CD4-positive, alpha-beta T cell (primary cell): ENCODE measurements at regions of chr11 and their contacts with region 1.

Region 1: GRCh38 chr11:82059505-82059904 is 674.2 kb downstream of the FAM181B start:
- DNase-seq: no peak
- ATAC-seq: no peak
- H3K4me3 ChIP-seq: no peak overlapping the region
- H3K4me3 Mint-ChIP-seq: no peak overlapping the region
- H3K27ac ChIP-seq: no peak overlapping the region
- H3K27ac Mint-ChIP-seq: no peak overlapping the region
- H3K4me1 ChIP-seq: no peaks in the 10 kb centered on the region
- H3K4me1 Mint-ChIP-seq: no peaks in the 10 kb centered on the region
- H3K27me3 ChIP-seq: no peaks in the 10 kb centered on the region
- H3K27me3 Mint-ChIP-seq: no peaks in the 10 kb centered on the region
- CTCF ChIP-seq: no peak

Region 2: DNA sequence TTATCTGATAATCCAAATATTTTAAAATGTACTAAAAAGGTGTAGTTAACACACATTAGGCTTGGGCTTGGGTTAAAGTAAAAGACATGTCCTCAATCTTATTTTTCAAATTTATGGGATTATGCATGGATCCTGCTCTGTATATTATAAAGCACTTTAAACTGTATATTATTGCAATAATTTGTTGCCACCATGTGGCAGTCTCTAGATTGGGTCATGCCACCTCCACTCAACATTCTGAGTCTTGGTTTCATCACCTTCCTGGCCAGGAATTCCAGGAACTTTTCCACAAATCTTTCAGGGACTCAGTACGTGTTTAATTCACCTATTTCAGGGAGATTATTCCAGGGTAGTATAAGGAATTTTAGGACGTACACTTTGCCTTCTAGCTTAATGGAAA is 21.4 kb before region 1 on chr11:
- CTCF ChIA-PET with region 1: no interaction called
- POLR2A ChIA-PET with region 1: no interaction called
- intact Hi-C with region 1: no loop called
- DNase-seq: no peak
- ATAC-seq: no peak
- H3K4me3 ChIP-seq: no peak overlapping the region
- H3K4me3 Mint-ChIP-seq: no peak overlapping the region
- H3K27ac ChIP-seq: no peak overlapping the region
- H3K27ac Mint-ChIP-seq: no peak overlapping the region
- H3K4me1 ChIP-seq: no peaks in the 10 kb centered on the region
- H3K4me1 Mint-ChIP-seq: no peaks in the 10 kb centered on the region
- H3K27me3 ChIP-seq: no peaks in the 10 kb centered on the region
- H3K27me3 Mint-ChIP-seq: no peaks in the 10 kb centered on the region
- CTCF ChIP-seq: no peak

Region 3: GRCh38 chr11:82082981-82083380 is 23.5 kb after region 1 on chr11:
- CTCF ChIA-PET with region 1: no interaction called
- POLR2A ChIA-PET with region 1: no interaction called
- intact Hi-C with region 1: loop called in 1 of 2 experiments (anchors 1 kb)
- DNase-seq: no peak
- ATAC-seq: no peak
- H3K4me3 ChIP-seq: no peak overlapping the region
- H3K4me3 Mint-ChIP-seq: no peak overlapping the region
- H3K27ac ChIP-seq: no peak overlapping the region
- H3K27ac Mint-ChIP-seq: no peak overlapping the region
- H3K4me1 ChIP-seq: no peaks in the 10 kb centered on the region
- H3K4me1 Mint-ChIP-seq: no peaks in the 10 kb centered on the region
- H3K27me3 ChIP-seq: no peaks in the 10 kb centered on the region
- H3K27me3 Mint-ChIP-seq: peaks cover 5% of the 10 kb centered on the region
- CTCF ChIP-seq: no peak

Region 4: GRCh38 chr11:82601711-82602110 is 542.2 kb after region 1 on chr11:
- CTCF ChIA-PET with region 1: no interaction called
- POLR2A ChIA-PET with region 1: no interaction called
- intact Hi-C with region 1: loop called in 1 of 2 experiments (anchors 10 kb)
- DNase-seq: no peak
- ATAC-seq: no peak
- H3K4me3 ChIP-seq: no peak overlapping the region
- H3K4me3 Mint-ChIP-seq: no peak overlapping the region
- H3K27ac ChIP-seq: no peak overlapping the region
- H3K27ac Mint-ChIP-seq: no peak overlapping the region
- H3K4me1 ChIP-seq: no peaks in the 10 kb centered on the region
- H3K4me1 Mint-ChIP-seq: no peaks in the 10 kb centered on the region
- H3K27me3 ChIP-seq: no peaks in the 10 kb centered on the region
- H3K27me3 Mint-ChIP-seq: no peaks in the 10 kb centered on the region
- CTCF ChIP-seq: no peak